OCI-LY7 (cell line): ENCODE measurements at regions of chr19 and their contacts with region 1.

Region 1: DNA sequence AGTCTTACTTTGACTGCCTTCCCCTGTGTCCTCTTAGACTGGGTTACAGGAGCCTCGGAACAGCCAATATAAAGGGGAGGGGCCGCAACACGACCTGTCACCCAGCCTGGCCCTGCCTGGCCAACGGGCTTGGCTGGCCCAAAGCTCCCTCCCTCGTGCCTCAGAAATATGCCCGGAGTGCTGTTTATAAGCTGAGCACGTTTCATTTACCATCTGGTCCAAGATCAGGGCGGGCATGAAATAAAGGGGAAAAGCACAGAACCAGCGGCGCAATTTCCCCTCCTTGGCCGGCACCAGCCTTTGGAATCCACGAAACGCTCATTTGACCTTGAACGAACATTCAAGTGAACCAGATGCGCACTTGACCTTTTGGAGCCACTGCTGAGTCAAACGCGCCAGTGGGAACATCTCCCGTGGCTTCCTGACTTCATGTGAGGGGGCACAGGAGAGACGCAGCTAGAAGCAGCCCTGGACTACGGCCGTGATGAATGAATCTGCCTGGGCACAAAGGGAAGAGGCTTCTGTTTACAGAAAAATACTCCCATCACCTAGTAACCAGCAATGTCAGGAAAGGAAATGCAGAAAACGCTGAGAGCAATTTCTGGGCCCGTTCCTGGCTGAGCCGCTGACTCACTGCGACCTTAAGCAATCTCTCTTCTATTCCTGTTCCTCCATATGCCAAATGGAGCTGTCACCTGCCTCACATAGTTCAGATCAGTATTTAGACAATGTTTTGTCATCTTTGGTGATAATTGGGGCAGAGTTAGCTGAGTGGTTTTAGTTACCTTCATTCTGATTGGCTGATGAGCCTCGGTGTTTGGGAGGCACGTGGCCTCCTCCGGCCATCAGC is 53.3 kb downstream of the RFX2 start:
- DNase-seq: no peak
- H3K4me3 ChIP-seq: no peak overlapping the region
- H3K27ac ChIP-seq: no peak overlapping the region
- H3K4me1 ChIP-seq: no peaks in the 10 kb centered on the region
- CTCF ChIP-seq: no peak

Region 2: GRCh38 chr19:5790573-5791520 is 266.2 kb before region 1 on chr19 and contains the start of gene DUS3L:
- CTCF ChIA-PET with region 1: no interaction called
- POLR2A ChIA-PET with region 1: no interaction called
- intact Hi-C with region 1: no loop called
- DNase-seq: peak; percentile 99
- H3K4me3 ChIP-seq: peak within 1 kb of the TSS; percentile 78
- H3K27ac ChIP-seq: peak within 1 kb of the TSS; percentile 81
- H3K4me1 ChIP-seq: peaks cover 9% of the 10 kb centered on the region
- CTCF ChIP-seq: no peak
- total RNA-seq, gene DUS3L: 55.8 and 63.7 TPM in 2 replicates

Region 3: DNA sequence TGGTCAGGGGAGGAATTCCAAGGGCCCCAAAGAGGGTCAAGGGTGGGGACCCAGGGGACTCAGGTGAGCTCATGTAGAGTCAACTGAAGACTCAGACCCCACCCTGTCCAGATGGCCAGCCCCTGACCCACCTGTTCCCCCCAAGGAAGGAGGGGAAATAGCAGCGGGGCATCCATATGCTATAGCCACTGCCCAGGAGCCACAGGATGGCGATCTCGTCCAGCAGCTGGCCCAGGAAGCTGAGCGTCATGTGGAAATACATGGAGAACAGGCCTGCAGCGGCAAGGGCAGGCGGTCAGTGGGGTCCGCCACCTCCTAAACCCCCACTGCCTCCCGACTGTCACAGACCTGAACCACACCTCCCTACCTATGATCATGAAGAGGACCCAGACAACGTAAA is 255.0 kb after region 1 on chr19:
- CTCF ChIA-PET with region 1: no interaction called
- POLR2A ChIA-PET with region 1: no interaction called
- intact Hi-C with region 1: loop called (anchors 10 kb)
- DNase-seq: no peak
- H3K4me3 ChIP-seq: no peak overlapping the region
- H3K27ac ChIP-seq: no peak overlapping the region
- H3K4me1 ChIP-seq: no peaks in the 10 kb centered on the region
- CTCF ChIP-seq: no peak